Endothelial cell of umbilical vein (primary cell): ENCODE measurements at regions of chr3 and their contacts with region 1.

Region 1: GRCh38 chr3:172673210-172673679 is 37.6 kb downstream of the NCEH1 start:
- DNase-seq: peak; percentile 75
- H3K4me3 ChIP-seq: no peak overlapping the region
- H3K27ac ChIP-seq: no peak overlapping the region
- H3K4me1 ChIP-seq: peaks cover 34% of the 10 kb centered on the region
- H3K27me3 ChIP-seq: no peaks in the 10 kb centered on the region
- CTCF ChIP-seq: peak; percentile 68
- POLR2A ChIP-seq: no peak

Region 2: GRCh38 chr3:172181932-172182586 is 491.2 kb before region 1 on chr3:
- CTCF ChIA-PET with region 1: no interaction called
- POLR2A ChIA-PET with region 1: no interaction called
- dilution Hi-C with region 1: no loop called
- intact Hi-C with region 1: no loop called
- DNase-seq: peak; percentile 76
- H3K4me3 ChIP-seq: no peak overlapping the region
- H3K27ac ChIP-seq: peak overlapping the region; percentile 62
- H3K4me1 ChIP-seq: peaks cover 38% of the 10 kb centered on the region
- H3K27me3 ChIP-seq: no peaks in the 10 kb centered on the region
- CTCF ChIP-seq: no peak
- POLR2A ChIP-seq: no peak

Region 3: DNA sequence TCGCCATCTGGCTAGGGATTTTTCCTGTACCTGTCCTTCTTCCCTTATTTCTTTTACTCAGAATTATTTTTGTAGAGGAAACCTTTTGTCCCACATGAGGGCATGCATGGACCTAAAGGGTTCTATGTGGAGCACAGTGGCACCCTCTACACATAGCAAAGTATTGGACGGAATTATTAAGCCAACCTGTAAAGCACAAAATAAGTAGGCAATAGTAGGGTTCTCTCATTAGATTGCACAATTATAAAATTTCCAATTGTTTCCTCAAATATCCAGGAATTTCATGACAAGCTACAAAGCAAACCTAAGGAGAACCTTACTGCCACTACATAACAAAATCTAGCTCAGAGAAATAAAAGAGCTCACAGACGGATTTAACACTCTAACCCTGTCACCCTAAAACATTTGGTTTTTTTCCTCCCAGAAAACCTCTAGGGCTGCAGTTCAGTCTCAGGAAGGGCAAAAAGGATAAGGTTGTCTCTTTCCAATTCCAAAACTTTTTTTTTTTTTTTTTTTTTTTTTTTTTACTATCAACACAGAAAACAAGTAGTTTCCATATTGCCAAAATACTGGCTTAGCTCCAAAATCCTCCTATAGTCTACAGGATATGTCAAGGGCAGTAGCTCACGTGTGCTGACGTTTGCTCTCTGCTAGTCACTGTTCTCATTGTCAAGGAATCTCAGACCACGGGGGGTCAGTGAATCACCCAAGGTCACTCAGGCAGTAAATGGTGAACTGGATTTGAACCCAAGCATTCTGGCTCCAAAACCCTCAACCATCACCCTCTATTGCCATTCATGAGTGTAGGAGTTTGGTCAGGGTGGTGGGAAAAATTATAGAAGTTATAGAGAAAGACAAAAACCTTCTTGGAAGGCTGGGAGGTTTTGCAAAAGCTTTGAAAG is 14.7 kb before region 1 on chr3:
- CTCF ChIA-PET with region 1: interaction called, 10 read pairs
- POLR2A ChIA-PET with region 1: no interaction called
- dilution Hi-C with region 1: no loop called
- intact Hi-C with region 1: no loop called
- DNase-seq: peak; percentile 95
- H3K4me3 ChIP-seq: no peak overlapping the region
- H3K27ac ChIP-seq: peak overlapping the region; percentile 79
- H3K4me1 ChIP-seq: peaks cover 16% of the 10 kb centered on the region
- H3K27me3 ChIP-seq: no peaks in the 10 kb centered on the region
- CTCF ChIP-seq: no peak
- POLR2A ChIP-seq: no peak

Region 4: DNA sequence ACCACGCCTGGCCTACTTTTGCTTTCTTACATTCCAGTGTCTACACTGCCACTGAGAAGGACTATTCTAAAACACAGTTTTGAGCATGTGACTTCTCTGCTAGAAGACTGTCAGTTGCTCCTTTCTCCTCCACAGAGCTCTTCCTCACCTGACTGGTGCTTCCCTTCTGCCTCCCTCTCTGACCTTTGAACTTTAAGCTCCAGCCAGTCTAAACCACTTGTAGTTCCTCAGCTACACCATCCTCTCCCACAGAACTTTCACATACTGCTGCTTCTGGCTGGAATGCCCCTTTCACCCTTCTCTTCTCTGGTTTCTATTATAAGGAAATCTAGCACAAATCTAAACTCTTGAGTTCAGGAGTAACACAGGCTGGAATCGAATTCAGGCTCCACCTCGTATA is 28.5 kb after region 1 on chr3:
- CTCF ChIA-PET with region 1: interaction called, 10 read pairs
- POLR2A ChIA-PET with region 1: no interaction called
- dilution Hi-C with region 1: no loop called
- intact Hi-C with region 1: no loop called
- DNase-seq: no peak
- H3K4me3 ChIP-seq: no peak overlapping the region
- H3K27ac ChIP-seq: no peak overlapping the region
- H3K4me1 ChIP-seq: no peaks in the 10 kb centered on the region
- H3K27me3 ChIP-seq: no peaks in the 10 kb centered on the region
- CTCF ChIP-seq: no peak
- POLR2A ChIP-seq: no peak

Region 5: GRCh38 chr3:172717493-172718088 is 44.3 kb after region 1 on chr3:
- CTCF ChIA-PET with region 1: interaction called, 16 read pairs
- POLR2A ChIA-PET with region 1: no interaction called
- dilution Hi-C with region 1: no loop called
- intact Hi-C with region 1: no loop called
- DNase-seq: no peak
- H3K4me3 ChIP-seq: no peak overlapping the region
- H3K27ac ChIP-seq: no peak overlapping the region
- H3K4me1 ChIP-seq: no peaks in the 10 kb centered on the region
- H3K27me3 ChIP-seq: no peaks in the 10 kb centered on the region
- CTCF ChIP-seq: peak; percentile 15 to 34
- POLR2A ChIP-seq: no peak

Region 6: DNA sequence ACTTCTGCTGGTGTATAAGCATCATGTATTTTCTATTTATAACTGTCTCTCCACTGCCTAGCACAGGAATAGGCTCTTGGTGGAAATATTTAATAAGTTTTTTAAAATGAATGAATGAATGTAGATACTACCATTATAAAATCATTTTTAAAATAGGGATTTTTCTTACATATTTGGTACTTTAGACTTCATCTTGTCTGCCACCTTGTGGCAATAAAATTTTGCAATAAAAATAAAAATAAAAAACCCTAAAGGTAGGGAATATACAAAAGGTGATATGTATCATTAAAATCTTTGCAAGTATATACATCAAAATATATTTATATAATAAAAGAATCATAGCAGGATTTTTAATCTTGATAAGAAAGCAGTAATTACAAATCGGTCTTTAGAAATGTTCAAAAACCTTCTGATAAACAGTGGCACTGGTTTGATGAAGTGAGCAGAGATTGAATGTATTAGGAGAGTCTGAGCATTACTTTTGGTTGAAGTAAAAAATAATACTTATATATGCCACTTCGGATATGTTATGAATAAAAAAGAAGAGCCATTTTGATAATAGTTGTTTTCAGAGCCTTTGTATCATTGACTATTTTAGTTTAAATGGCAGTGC is 372.6 kb after region 1 on chr3:
- CTCF ChIA-PET with region 1: interaction called, 3 read pairs
- POLR2A ChIA-PET with region 1: no interaction called
- dilution Hi-C with region 1: no loop called
- intact Hi-C with region 1: loop called (anchors 10 kb)
- DNase-seq: peak; percentile 35
- H3K4me3 ChIP-seq: no peak overlapping the region
- H3K27ac ChIP-seq: no peak overlapping the region
- H3K4me1 ChIP-seq: no peaks in the 10 kb centered on the region
- H3K27me3 ChIP-seq: no peaks in the 10 kb centered on the region
- CTCF ChIP-seq: peak in 1 of 2 donors; percentile 4
- POLR2A ChIP-seq: no peak